Mucosa of descending colon (tissue), 3 donors: ENCODE measurements at regions of chr5 and their contacts with region 1.

Region 1: DNA sequence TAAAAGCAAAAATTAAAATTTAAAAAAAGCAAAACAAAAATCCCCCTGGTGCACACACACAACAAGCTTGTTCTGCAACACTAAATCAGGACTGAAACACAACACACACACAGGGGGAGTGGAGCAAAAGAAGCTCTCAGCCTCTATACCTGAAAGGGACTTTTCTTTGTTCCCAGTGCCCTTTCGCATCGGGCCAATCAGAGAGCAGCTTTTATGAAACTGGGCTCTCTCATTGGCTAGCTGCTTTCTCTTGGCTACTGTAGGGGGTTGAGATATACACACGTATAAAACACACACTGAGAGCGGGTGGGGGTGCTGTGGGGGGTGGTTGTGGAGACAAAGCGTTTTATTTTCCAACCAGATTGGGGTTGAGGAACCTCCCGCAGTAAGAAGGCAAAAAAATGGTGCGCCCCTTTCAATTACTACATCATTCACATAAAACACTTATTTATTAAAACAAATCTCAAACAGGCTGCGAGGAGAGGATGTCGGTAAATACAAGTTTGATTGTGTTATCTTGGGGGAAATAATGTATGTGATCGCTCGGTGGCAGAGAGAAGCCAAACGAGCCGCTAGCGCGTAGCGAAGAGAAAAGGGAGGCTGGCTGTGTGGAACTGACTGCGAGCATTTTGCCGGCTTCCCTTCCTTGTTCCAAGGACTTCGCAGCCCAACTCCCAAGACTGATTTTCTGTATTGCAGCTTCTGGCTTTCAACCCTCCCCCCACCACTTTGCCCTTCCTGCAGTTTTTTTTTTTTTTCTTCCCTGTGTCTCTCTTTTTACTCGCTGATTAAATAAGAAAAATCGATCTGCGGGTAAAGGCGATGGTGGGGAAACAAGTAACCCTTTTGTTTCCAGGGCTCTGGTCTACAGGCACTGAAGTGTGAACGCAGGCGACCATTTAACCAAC is 2.5 kb upstream of the ZNF608 start:
- DNase-seq: peak; percentile 76 to 90 (median 77)
- ATAC-seq: peak; percentile 84
- H3K4me3 ChIP-seq: no peak overlapping the region
- H3K4me1 ChIP-seq: peaks cover 11% of the 10 kb centered on the region
- CTCF ChIP-seq: no peak

Region 2: GRCh38 chr5:124649491-124650146 is 99.3 kb before region 1 on chr5:
- intact Hi-C with region 1: loop called in 1 of 2 experiments (anchors 10 kb)
- DNase-seq: peak; percentile 76 to 89 (median 77)
- ATAC-seq: peak; percentile 79
- H3K4me3 ChIP-seq: no peak overlapping the region
- H3K4me1 ChIP-seq: peaks cover 36% of the 10 kb centered on the region
- CTCF ChIP-seq: no peak

Region 3: DNA sequence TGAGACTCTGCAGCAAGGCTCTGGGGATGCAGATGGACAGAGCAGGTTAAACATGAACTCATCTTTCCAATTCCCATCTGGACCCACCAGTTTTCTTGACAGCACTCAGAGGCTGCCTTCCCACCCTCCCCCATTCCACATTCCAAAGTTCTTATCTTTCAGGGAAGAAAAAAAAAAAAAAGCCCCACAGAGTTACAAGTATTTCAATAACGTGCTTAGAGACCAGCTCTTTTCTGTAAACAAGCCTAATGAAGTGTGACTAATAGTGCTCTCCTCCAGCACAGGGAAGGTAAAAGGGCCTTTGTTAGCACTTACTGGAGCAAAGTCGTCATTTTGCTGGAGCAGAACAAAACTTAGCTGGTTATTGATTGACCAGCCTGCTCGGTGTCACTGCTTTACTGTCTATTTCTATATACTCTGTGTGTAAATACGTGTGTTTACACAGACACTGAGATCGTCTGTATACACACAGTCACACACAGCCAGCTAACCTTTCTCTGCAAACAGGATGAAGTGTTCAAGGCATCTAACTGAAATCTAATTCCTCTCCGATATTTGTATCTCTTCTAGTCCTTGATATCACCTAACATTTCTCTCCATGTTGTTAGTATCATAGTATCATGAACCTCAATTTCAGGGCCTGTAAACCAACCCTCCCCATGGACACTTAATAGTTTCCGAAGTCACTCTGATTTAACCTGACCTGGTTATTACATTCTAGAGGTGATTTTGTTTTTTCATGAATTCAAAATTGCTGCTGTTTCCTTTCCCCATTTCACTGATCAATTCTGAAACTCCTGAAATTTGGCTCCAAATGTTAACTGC is 87.4 kb before region 1 on chr5:
- intact Hi-C with region 1: loop called (anchors 2 to 10 kb)
- DNase-seq: no peak
- ATAC-seq: peak; percentile 59
- H3K4me3 ChIP-seq: no peak overlapping the region
- H3K4me1 ChIP-seq: peaks cover 57% of the 10 kb centered on the region
- CTCF ChIP-seq: no peak

Region 4: DNA sequence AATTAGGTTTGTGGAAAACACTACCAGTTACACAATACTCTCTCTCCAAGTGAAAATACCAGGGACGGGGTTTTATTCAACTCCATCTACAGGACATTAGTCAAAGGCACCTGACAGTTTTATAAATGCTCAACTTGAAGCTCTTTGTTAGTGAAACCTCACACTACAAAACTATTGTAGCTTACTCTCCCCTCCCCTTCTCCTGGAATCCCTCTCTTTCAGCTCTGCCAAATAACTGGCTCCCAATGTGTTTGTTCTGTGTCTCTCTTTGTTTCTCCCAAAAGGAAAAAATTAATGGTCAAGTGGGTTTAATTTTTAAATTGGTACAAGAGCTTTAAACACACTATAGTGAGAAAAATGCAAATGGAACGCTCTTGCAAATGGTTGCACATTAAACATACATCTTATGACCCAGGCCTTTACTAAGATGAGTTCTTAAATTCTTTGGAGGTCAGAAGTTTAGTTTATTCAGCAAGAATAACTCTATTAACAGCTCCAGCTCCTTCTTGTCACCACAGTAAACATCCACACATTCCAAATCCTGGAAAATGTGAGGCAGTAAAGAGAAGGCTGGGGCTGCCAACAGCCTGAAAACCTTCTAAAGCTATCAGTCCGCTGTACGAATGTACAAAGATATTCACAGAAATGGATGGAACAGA is 50.9 kb before region 1 on chr5:
- intact Hi-C with region 1: loop called (anchors 5 to 10 kb)
- DNase-seq: no peak
- ATAC-seq: no peak
- H3K4me3 ChIP-seq: no peak overlapping the region
- H3K4me1 ChIP-seq: peaks cover 17% of the 10 kb centered on the region
- CTCF ChIP-seq: no peak

Region 5: GRCh38 chr5:124980163-124980941 is 231.4 kb after region 1 on chr5:
- intact Hi-C with region 1: no loop called
- DNase-seq: no peak
- ATAC-seq: no peak
- H3K4me3 ChIP-seq: no peak overlapping the region
- H3K4me1 ChIP-seq: peaks cover 13% of the 10 kb centered on the region
- CTCF ChIP-seq: no peak

Region 6: DNA sequence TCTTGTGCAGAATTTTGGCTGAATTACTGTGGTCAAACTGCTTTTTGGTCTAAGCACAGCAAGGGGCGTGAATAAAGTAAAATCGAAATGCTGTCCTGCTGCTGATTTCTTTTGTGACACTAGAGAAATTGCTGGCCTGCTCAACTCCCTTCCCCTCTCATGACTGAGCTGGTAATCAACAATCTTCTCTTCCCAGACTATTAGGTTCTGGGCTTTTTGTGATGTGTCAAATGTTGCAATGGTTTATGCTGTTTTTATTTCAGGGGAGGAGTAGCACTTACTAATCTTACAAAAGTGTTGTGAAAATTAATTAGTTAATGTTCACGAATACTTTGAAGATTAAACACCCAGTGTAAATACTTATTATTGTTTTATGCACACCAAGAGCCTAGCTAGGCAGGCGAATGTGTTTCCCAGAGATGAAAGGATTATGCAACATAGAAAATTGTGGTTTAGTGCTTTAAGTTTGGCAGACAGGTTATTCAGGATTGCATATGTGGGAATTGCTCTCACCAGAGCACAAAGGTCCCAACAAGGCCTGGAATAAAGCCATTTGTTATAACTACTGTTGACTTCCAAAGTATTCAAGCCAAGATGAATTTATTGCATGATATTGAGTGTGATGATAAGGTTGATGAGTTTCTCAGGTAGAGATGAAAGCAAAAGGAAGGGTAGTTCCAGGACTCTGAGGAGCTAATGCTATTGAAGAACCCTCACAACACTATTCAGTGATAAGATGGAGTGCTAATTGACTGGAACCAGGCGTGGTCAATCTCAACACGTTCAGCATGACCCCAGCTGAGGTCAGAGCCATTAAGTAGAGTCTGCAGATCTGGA is 278.2 kb after region 1 on chr5:
- intact Hi-C with region 1: loop called in 1 of 2 experiments (anchors 10 kb)
- DNase-seq: peak in 1 of 3 donors; percentile 63
- ATAC-seq: peak; percentile 96
- H3K4me3 ChIP-seq: no peak overlapping the region
- H3K4me1 ChIP-seq: peaks cover 5% of the 10 kb centered on the region
- CTCF ChIP-seq: no peak